ENCODE measurements at regions of chr4 and their contacts with region 1.

Region 1: DNA sequence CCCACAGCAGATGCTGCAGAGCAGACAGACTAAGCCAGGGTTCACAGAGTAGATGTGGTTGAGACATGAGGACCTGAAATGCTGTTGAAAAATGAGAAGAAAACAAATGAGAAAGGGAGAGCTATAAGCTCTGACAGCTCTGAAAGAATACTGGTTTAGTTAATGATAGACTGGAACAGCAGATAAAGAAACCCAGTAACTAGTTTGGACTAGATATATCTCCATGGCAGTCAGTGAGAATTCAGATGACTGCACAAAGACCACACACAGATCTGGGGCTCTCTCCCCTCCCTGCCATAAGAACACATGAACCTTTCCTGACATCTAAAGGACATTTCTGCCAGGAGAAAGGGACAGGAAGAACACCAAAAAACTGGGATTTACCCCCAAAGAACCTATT is 8.2 kb downstream of the NAA11 start:
- DNase-seq: no peak
- ATAC-seq: no peak
- H3K4me3 ChIP-seq: no peak overlapping the region
- H3K4me3 Mint-ChIP-seq: no peak overlapping the region
- H3K27ac ChIP-seq: no peak overlapping the region
- H3K27ac Mint-ChIP-seq: no peak overlapping the region
- H3K4me1 ChIP-seq: no peaks in the 10 kb centered on the region
- H3K4me1 Mint-ChIP-seq: no peaks in the 10 kb centered on the region
- H3K27me3 ChIP-seq: no peaks in the 10 kb centered on the region
- H3K27me3 Mint-ChIP-seq: no peaks in the 10 kb centered on the region

Region 2: GRCh38 chr4:77911842-77912450 is 1405.8 kb before region 1 on chr4:
- CTCF ChIA-PET with region 1: no interaction called
- POLR2A ChIA-PET with region 1: no interaction called
- DNase-seq: no peak
- ATAC-seq: no peak
- H3K4me3 ChIP-seq: no peak overlapping the region
- H3K4me3 Mint-ChIP-seq: no peak overlapping the region
- H3K27ac ChIP-seq: no peak overlapping the region
- H3K27ac Mint-ChIP-seq: no peak overlapping the region
- H3K4me1 ChIP-seq: no peaks in the 10 kb centered on the region
- H3K4me1 Mint-ChIP-seq: peaks cover 4 to 13% (median 8%) of the 10 kb centered on the region in 3 donors
- H3K27me3 ChIP-seq: no peaks in the 10 kb centered on the region
- H3K27me3 Mint-ChIP-seq: no peaks in the 10 kb centered on the region

Region 3: GRCh38 chr4:79331126-79331876 is 13.6 kb after region 1 on chr4:
- CTCF ChIA-PET with region 1: no interaction called
- POLR2A ChIA-PET with region 1: no interaction called
- DNase-seq: no peak
- ATAC-seq: no peak
- H3K4me3 ChIP-seq: no peak overlapping the region
- H3K4me3 Mint-ChIP-seq: no peak overlapping the region
- H3K27ac ChIP-seq: no peak overlapping the region
- H3K27ac Mint-ChIP-seq: no peak overlapping the region
- H3K4me1 ChIP-seq: no peaks in the 10 kb centered on the region
- H3K4me1 Mint-ChIP-seq: no peaks in the 10 kb centered on the region
- H3K27me3 ChIP-seq: no peaks in the 10 kb centered on the region
- H3K27me3 Mint-ChIP-seq: no peaks in the 10 kb centered on the region

Region 4: GRCh38 chr4:79357365-79357764 is 39.7 kb after region 1 on chr4:
- CTCF ChIA-PET with region 1: no interaction called
- POLR2A ChIA-PET with region 1: interaction called, 6 to 13 read pairs
- DNase-seq: no peak
- ATAC-seq: no peak
- H3K4me3 ChIP-seq: no peak overlapping the region
- H3K4me3 Mint-ChIP-seq: no peak overlapping the region
- H3K27ac ChIP-seq: no peak overlapping the region
- H3K27ac Mint-ChIP-seq: no peak overlapping the region
- H3K4me1 ChIP-seq: no peaks in the 10 kb centered on the region
- H3K4me1 Mint-ChIP-seq: no peaks in the 10 kb centered on the region
- H3K27me3 ChIP-seq: no peaks in the 10 kb centered on the region
- H3K27me3 Mint-ChIP-seq: no peaks in the 10 kb centered on the region

Region 5: DNA sequence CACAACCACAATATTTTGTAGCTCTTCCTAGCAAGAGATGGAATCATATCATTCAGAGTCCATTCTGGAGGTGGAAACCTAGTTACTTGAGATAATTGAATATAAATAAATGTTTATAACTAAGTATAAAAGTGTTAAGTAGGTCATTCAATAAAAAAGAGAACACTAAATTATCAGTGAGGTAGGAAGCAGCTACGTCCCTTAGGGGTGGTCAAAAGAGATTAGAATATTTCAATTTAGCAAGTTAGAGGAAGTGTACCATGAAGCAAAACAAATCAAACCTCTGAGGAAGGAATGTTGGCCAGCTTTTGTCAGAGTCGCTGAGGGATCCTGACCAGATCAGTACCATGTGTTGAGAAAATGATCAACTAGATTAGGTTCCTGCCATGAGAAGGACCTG is 52.3 kb after region 1 on chr4:
- CTCF ChIA-PET with region 1: no interaction called
- POLR2A ChIA-PET with region 1: no interaction called
- DNase-seq: no peak
- ATAC-seq: no peak
- H3K4me3 ChIP-seq: no peak overlapping the region
- H3K4me3 Mint-ChIP-seq: no peak overlapping the region
- H3K27ac ChIP-seq: no peak overlapping the region
- H3K27ac Mint-ChIP-seq: no peak overlapping the region
- H3K4me1 ChIP-seq: no peaks in the 10 kb centered on the region
- H3K4me1 Mint-ChIP-seq: no peaks in the 10 kb centered on the region
- H3K27me3 ChIP-seq: no peaks in the 10 kb centered on the region
- H3K27me3 Mint-ChIP-seq: no peaks in the 10 kb centered on the region

Region 6: GRCh38 chr4:80173401-80173800 is 855.7 kb after region 1 on chr4:
- CTCF ChIA-PET with region 1: no interaction called
- POLR2A ChIA-PET with region 1: no interaction called
- DNase-seq: peak in 31 of 35 experiments; percentile 18 to 86 (median 50)
- ATAC-seq: peak; percentile 96 to 98 (median 96)
- H3K4me3 ChIP-seq: no peak overlapping the region
- H3K4me3 Mint-ChIP-seq: peak overlapping the region; percentile 34 to 76 (median 35)
- H3K27ac ChIP-seq: peak overlapping the region; percentile 93
- H3K27ac Mint-ChIP-seq: peak overlapping the region; percentile 94 to 99
- H3K4me1 ChIP-seq: peaks cover 33 to 41% of the 10 kb centered on the region in 2 experiments
- H3K4me1 Mint-ChIP-seq: peaks cover 63 to 71% (median 70%) of the 10 kb centered on the region in 3 donors
- H3K27me3 ChIP-seq: no peaks in the 10 kb centered on the region
- H3K27me3 Mint-ChIP-seq: no peaks in the 10 kb centered on the region

Measured in T-cell (primary cell).